Brain microvascular endothelial cell (primary cell): ENCODE measurements at regions of chr7 and their contacts with region 1.

Region 1: GRCh38 chr7:23712368-23713284 is 2.6 kb downstream of the STK31 start:
- DNase-seq: peak; percentile 6
- H3K4me3 ChIP-seq: no peak overlapping the region
- H3K27ac ChIP-seq: no peak overlapping the region
- H3K27me3 ChIP-seq: no peaks in the 10 kb centered on the region
- CTCF ChIP-seq: peak; percentile 14

Region 2: GRCh38 chr7:23546897-23547572 is 165.6 kb before region 1 on chr7:
- in situ Hi-C with region 1: loop called (anchors 25 kb)
- DNase-seq: peak; percentile 86
- H3K4me3 ChIP-seq: no peak overlapping the region
- H3K27ac ChIP-seq: no peak overlapping the region
- H3K27me3 ChIP-seq: no peaks in the 10 kb centered on the region
- CTCF ChIP-seq: peak; percentile 95

Region 3: GRCh38 chr7:24406053-24406788 is 693.6 kb after region 1 on chr7:
- in situ Hi-C with region 1: no loop called
- DNase-seq: no peak
- H3K4me3 ChIP-seq: no peak overlapping the region
- H3K27ac ChIP-seq: no peak overlapping the region
- H3K27me3 ChIP-seq: no peaks in the 10 kb centered on the region
- CTCF ChIP-seq: no peak